Activated CD8-positive, alpha-beta T cell treated with anti-CD3 and anti-CD28 coated beads, Interleukin-2, amount 10 ng/mL, durations not matched to agents 7 days and 5 days (primary cell): ENCODE measurements at regions of chr17 and their contacts with region 1.

Region 1: GRCh38 chr17:7454980-7455379 is 10.1 kb downstream of the CHRNB1 start:
- DNase-seq: no peak
- ATAC-seq: no peak
- H3K4me3 Mint-ChIP-seq: peak overlapping the region; percentile 90
- H3K27ac Mint-ChIP-seq: peak overlapping the region; percentile 98
- H3K4me1 Mint-ChIP-seq: peaks cover 32% of the 10 kb centered on the region
- H3K27me3 Mint-ChIP-seq: no peaks in the 10 kb centered on the region

Region 2: GRCh38 chr17:7444682-7445618 is 10.0 kb before region 1 on chr17 and contains the start of gene CHRNB1:
- CTCF ChIA-PET with region 1: interaction called, 8 read pairs
- POLR2A ChIA-PET with region 1: interaction called, 21 read pairs
- DNase-seq: peak; percentile 37
- ATAC-seq: peak; percentile 17
- H3K4me3 Mint-ChIP-seq: peak within 1 kb of the TSS; percentile 63
- H3K27ac Mint-ChIP-seq: peak within 1 kb of the TSS; percentile 61
- H3K4me1 Mint-ChIP-seq: peaks cover 30% of the 10 kb centered on the region
- H3K27me3 Mint-ChIP-seq: peaks cover 28% of the 10 kb centered on the region
- total RNA-seq, gene CHRNB1: 14.1 to 15.7 TPM

Region 3: DNA sequence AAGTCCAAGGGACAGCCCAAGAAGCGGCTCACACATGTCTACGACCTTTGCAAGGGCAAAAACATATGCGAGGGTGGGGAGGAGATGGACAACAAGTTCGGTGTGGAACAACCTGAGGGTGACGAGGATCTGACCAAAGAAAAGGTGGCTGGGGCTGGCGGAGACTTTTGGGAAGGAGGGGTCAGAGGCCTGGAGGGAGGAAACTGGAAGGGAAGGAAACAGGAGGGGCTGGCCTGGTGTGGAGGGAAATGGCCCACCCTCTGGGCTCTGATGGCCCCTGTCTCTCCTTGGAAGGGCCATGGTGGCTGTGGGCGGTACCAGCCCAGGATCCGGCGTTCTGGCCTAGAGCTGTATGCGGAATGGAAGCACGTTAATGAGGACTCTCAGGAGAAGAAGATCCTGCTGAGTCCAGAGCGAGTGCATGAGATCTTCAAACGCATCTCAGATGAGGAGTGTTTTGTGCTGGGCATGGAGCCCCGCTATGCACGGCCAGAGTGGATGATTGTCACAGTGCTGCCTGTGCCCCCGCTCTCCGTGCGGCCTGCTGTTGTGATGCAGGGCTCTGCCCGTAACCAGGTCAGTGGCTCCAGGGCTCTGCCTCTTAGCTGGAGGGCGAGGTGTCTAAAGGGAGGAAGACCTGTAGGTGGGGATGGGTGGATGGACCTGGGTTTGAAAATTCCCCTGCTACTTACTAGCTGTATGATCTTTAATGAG is 41.6 kb after region 1 on chr17:
- CTCF ChIA-PET with region 1: no interaction called
- POLR2A ChIA-PET with region 1: no interaction called
- DNase-seq: no peak
- ATAC-seq: peak; percentile 17
- H3K4me3 Mint-ChIP-seq: no peak overlapping the region
- H3K27ac Mint-ChIP-seq: no peak overlapping the region
- H3K4me1 Mint-ChIP-seq: peaks cover 23% of the 10 kb centered on the region
- H3K27me3 Mint-ChIP-seq: no peaks in the 10 kb centered on the region

Region 4: DNA sequence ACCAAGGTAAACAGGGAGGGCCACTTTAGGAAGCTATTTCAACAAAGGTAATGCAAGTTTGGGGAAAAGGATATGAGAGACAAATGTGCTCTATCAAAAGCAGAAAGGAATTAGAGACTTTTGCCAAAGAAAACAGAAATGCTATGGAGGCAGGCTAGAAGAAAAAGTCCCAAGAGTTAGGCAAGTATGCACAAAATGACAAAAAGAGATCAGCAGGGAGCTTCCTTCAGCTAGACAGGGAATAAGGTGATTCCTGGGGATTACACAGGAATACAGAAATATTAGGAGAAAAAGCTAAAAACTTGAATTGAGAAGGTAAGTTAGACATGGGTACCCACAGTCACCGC is 157.3 kb after region 1 on chr17:
- CTCF ChIA-PET with region 1: no interaction called
- POLR2A ChIA-PET with region 1: no interaction called
- DNase-seq: no peak
- ATAC-seq: no peak
- H3K4me3 Mint-ChIP-seq: peak overlapping the region; percentile 12
- H3K27ac Mint-ChIP-seq: no peak overlapping the region
- H3K4me1 Mint-ChIP-seq: peaks cover 25% of the 10 kb centered on the region
- H3K27me3 Mint-ChIP-seq: no peaks in the 10 kb centered on the region